ENCODE measurements at regions of chr14 and their contacts with region 1.

Region 1: DNA sequence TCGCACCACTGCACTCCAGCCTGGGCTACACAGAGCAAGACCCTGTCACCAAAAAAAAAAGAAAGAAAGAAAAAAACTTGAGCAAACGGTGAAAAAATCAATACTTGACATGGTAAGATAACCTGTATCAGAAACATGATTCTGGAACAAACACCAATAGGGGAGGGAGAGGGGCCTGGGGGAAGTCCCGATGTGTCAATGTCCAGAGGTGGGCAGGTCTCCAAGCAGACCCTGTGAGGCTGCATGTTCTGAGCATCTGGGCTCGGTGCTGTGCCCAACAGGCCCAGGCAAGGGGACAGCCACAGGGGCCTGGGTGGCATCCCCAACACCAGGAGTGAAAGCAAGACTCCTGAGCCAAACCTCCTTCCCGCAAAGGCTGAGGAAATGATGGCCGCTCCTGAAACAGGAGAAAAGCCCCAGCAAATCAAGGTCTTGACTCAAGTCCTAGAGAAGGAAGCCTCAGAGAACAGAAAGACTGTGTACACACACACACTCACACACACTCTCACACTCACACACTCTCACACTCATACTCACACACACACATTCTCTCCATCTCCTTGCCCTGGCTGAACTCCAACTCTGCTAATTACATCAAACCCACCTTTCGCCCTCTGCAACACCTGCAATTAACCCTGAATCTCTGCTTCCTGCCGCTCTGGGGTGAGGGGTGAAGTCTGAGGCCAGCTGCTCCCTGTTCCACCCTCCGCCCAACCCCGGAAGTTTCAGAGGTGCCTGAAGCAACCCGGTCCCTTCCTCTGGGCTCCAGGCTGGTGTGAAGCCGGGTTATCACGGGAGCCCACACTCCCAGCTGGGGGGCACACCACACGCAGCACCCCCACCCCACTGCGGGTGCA is 20.4 kb downstream of the CCDC88C start:
- DNase-seq: peak; percentile 75
- ATAC-seq: peak; percentile 81
- H3K4me3 Mint-ChIP-seq: peak overlapping the region; percentile 86
- H3K27ac Mint-ChIP-seq: peak overlapping the region; percentile 91
- H3K4me1 Mint-ChIP-seq: peaks cover 73% of the 10 kb centered on the region
- H3K27me3 Mint-ChIP-seq: no peaks in the 10 kb centered on the region

Region 2: DNA sequence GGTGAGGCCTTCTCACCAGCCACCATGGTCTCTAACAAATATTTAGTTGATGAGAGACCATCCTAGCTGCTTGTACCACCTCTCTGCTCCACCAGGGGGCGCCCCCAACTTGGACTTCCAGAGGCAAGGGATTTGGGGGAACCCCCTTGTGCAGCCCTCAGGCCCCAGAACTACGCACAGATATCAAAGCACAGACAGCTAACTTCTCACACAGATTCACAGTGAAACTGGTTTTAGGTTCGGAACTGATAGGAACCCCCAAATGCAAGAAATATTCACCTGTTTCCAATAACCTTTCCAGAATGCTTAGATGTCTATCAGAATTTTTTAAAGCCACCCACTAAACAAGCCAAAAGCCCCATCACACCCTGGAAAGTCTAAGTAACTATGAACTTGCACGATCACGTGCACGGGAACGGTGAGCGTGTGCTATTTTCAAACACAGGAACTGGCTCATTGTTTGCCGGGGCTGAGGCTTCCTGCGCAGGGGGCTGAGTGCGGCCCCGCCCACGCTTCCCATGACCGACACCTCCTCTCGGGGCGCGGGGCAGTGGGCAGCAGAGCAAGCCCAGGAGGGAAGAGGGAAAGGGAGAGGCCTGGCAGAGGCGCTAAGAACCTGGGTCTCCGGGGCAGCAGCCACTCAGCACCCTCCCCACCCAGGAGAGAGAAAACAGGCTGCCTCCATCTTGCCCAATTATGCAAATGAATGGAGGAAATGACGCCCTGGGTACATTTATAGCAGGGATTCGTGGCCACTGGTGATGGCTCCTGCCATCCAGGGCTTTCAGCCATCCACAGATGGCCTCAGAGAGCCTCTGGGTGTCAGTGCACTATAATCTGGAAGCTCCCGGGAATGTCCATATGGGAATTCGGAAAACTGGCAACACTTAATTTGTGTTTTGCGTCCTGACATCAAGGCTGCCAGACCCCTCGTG is 73.2 kb before region 1 on chr14:
- POLR2A ChIA-PET with region 1: interaction called, 20 read pairs
- DNase-seq: peak; percentile 93
- ATAC-seq: peak; percentile 81
- H3K4me3 Mint-ChIP-seq: peak overlapping the region; percentile 79
- H3K27ac Mint-ChIP-seq: peak overlapping the region; percentile 95
- H3K4me1 Mint-ChIP-seq: peaks cover 55% of the 10 kb centered on the region
- H3K27me3 Mint-ChIP-seq: no peaks in the 10 kb centered on the region

Region 3: GRCh38 chr14:91350813-91351511 is 46.2 kb before region 1 on chr14:
- POLR2A ChIA-PET with region 1: interaction called, 16 read pairs
- DNase-seq: peak; percentile 67
- ATAC-seq: peak; percentile 78
- H3K4me3 Mint-ChIP-seq: peak overlapping the region; percentile 85
- H3K27ac Mint-ChIP-seq: peak overlapping the region; percentile 96
- H3K4me1 Mint-ChIP-seq: peaks cover 78% of the 10 kb centered on the region
- H3K27me3 Mint-ChIP-seq: no peaks in the 10 kb centered on the region

Region 4: DNA sequence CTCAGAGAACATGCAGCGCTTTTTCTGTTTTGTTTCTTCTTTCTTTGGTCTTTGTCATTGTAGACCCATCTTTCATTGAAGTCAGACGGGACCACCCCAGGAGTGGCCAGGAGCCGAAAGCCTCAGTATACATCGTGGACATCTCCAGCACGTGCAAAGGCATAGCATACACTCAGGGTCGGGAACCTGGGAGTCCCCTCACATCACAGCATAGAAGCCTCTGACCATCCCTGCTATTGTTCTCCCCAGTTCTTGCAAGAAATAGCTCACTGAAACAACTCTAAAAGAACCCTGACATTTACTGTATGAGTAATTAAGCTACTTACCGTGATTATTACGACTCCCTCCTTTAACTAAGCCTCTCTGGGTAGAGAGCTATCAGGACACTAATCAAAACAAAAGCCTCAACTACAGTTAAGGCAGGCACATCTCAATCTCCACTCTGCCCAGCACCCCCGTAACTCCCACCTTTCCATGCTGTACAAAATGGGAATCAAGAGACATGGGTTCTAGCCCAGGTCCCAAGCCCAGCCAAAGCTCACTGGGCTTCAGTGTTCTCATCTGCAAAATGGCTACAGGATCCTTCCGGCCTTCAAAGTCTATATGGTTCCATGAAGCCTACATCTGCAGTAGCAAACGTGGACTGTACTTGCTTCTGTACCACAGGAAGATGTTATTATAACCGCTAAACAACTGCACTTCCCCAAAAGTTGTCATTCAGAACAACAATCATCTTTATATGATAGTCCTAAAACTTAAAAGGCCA is 13.8 kb after region 1 on chr14:
- POLR2A ChIA-PET with region 1: interaction called, 139 read pairs
- DNase-seq: no peak
- ATAC-seq: peak; percentile 18
- H3K4me3 Mint-ChIP-seq: peak overlapping the region; percentile 86
- H3K27ac Mint-ChIP-seq: peak overlapping the region; percentile 91
- H3K4me1 Mint-ChIP-seq: peaks cover 80% of the 10 kb centered on the region
- H3K27me3 Mint-ChIP-seq: no peaks in the 10 kb centered on the region

Region 5: DNA sequence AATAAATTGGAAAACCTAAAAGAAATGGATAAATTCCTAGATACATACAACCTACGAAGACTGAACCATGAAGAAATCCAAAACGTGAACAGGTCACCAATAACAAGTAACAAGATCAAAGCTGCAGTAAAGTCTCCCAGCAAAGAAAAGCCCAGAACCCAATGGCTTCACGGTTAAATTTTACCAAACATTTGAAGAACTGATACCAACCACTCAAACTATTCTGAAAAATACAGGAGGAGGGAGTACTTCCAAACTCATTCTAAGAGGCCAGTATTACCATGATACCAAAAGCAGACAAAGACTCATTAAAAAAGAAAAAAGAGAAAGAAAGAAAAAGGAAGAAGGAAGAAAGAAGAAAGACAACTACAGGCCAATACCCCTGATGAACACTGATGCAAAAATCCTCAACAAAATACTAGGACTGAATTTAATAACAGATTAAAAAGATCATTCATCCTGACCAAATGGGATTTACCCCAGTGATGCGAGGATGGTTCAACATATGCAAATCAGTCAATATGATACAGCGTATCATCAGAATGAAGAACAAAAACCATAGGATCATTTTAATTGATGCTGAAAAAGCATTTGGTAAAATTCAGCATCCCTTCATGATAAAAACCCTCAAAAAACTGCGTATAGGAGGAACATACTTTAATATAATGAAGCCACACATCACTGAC is 47.3 kb after region 1 on chr14:
- POLR2A ChIA-PET with region 1: no interaction called
- DNase-seq: no peak
- ATAC-seq: no peak
- H3K4me3 Mint-ChIP-seq: no peak overlapping the region
- H3K27ac Mint-ChIP-seq: no peak overlapping the region
- H3K4me1 Mint-ChIP-seq: no peaks in the 10 kb centered on the region
- H3K27me3 Mint-ChIP-seq: peaks cover 26% of the 10 kb centered on the region

Measured in activated naive CD8-positive, alpha-beta T cell treated with anti-CD3 and anti-CD28 coated beads, Interleukin-2, amount 10 ng/mL, durations not matched to agents 7 days and 5 days (primary cell).